B cell (primary cell): ENCODE measurements at regions of chr14 and their contacts with region 1.

Region 1: GRCh38 chr14:21917699-21918436 is 244.2 kb upstream of the OR4E1 start:
- DNase-seq: peak; percentile 81
- ATAC-seq: peak; percentile 63
- H3K4me3 ChIP-seq: peak overlapping the region in 3 of 5 experiments; percentile 13 to 21 (median 18)
- H3K4me3 Mint-ChIP-seq: peak overlapping the region; percentile 64
- H3K27ac ChIP-seq: no peak overlapping the region
- H3K27ac Mint-ChIP-seq: peak overlapping the region; percentile 44
- H3K4me1 ChIP-seq: peaks cover 12 to 23% of the 10 kb centered on the region in 2 donors
- H3K4me1 Mint-ChIP-seq: peaks cover 28% of the 10 kb centered on the region
- H3K27me3 ChIP-seq: no peaks in the 10 kb centered on the region
- H3K27me3 Mint-ChIP-seq: no peaks in the 10 kb centered on the region
- CTCF ChIP-seq: peak; percentile 89

Region 2: DNA sequence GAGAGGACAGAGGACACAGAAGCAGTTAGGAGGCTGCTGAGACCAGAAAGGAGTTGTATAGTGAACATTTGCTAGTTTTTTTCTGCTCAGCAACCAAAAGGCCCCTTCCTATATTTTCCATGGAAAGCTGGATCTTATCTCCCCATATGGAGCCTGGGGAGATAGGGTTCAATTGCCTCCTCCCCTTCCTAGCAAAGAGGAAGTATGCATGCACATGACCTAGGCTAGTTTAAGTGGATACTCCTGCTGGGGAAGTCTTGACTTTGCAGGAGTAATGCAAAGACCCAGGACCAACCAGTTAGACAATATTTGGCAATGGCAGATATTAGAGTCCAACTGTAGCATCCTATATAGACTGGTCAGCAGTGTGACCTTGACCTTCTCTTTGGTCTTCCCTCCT is 477.0 kb before region 1 on chr14:
- CTCF ChIA-PET with region 1: no interaction called
- POLR2A ChIA-PET with region 1: no interaction called
- intact Hi-C with region 1: no loop called
- DNase-seq: no peak
- ATAC-seq: no peak
- H3K4me3 ChIP-seq: no peak overlapping the region
- H3K4me3 Mint-ChIP-seq: no peak overlapping the region
- H3K27ac ChIP-seq: no peak overlapping the region
- H3K27ac Mint-ChIP-seq: no peak overlapping the region
- H3K4me1 ChIP-seq: peaks cover 12 to 13% of the 10 kb centered on the region in 2 donors
- H3K4me1 Mint-ChIP-seq: peaks cover 35% of the 10 kb centered on the region
- H3K27me3 ChIP-seq: no peaks in the 10 kb centered on the region
- H3K27me3 Mint-ChIP-seq: no peaks in the 10 kb centered on the region
- CTCF ChIP-seq: no peak

Region 3: GRCh38 chr14:21902650-21903103 is 15.2 kb before region 1 on chr14:
- CTCF ChIA-PET with region 1: interaction called, 17 read pairs
- POLR2A ChIA-PET with region 1: no interaction called
- intact Hi-C with region 1: no loop called
- DNase-seq: peak; percentile 47
- ATAC-seq: peak; percentile 51
- H3K4me3 ChIP-seq: no peak overlapping the region
- H3K4me3 Mint-ChIP-seq: peak overlapping the region; percentile 59
- H3K27ac ChIP-seq: no peak overlapping the region
- H3K27ac Mint-ChIP-seq: no peak overlapping the region
- H3K4me1 ChIP-seq: peaks cover 0 to 3% of the 10 kb centered on the region in 2 donors
- H3K4me1 Mint-ChIP-seq: peaks cover 7% of the 10 kb centered on the region
- H3K27me3 ChIP-seq: peaks cover 0 to 12% (median 7%) of the 10 kb centered on the region in 4 experiments
- H3K27me3 Mint-ChIP-seq: peaks cover 37% of the 10 kb centered on the region
- CTCF ChIP-seq: peak; percentile 51

Region 4: GRCh38 chr14:21933681-21934080 is 15.8 kb after region 1 on chr14:
- CTCF ChIA-PET with region 1: interaction called, 252 read pairs
- POLR2A ChIA-PET with region 1: interaction called, 4 read pairs
- intact Hi-C with region 1: loop called (anchors 1 kb)
- DNase-seq: peak; percentile 65
- ATAC-seq: peak; percentile 57
- H3K4me3 ChIP-seq: no peak overlapping the region
- H3K4me3 Mint-ChIP-seq: no peak overlapping the region
- H3K27ac ChIP-seq: no peak overlapping the region
- H3K27ac Mint-ChIP-seq: no peak overlapping the region
- H3K4me1 ChIP-seq: no peaks in the 10 kb centered on the region
- H3K4me1 Mint-ChIP-seq: no peaks in the 10 kb centered on the region
- H3K27me3 ChIP-seq: no peaks in the 10 kb centered on the region
- H3K27me3 Mint-ChIP-seq: no peaks in the 10 kb centered on the region
- CTCF ChIP-seq: peak; percentile 85

Region 5: GRCh38 chr14:21940887-21941856 is 23.3 kb after region 1 on chr14:
- CTCF ChIA-PET with region 1: interaction called, 17 read pairs
- POLR2A ChIA-PET with region 1: no interaction called
- intact Hi-C with region 1: no loop called
- DNase-seq: peak; percentile 25
- ATAC-seq: peak; percentile 33
- H3K4me3 ChIP-seq: no peak overlapping the region
- H3K4me3 Mint-ChIP-seq: no peak overlapping the region
- H3K27ac ChIP-seq: no peak overlapping the region
- H3K27ac Mint-ChIP-seq: no peak overlapping the region
- H3K4me1 ChIP-seq: no peaks in the 10 kb centered on the region
- H3K4me1 Mint-ChIP-seq: no peaks in the 10 kb centered on the region
- H3K27me3 ChIP-seq: peaks cover 0 to 4% (median 2%) of the 10 kb centered on the region in 4 experiments
- H3K27me3 Mint-ChIP-seq: peaks cover 25% of the 10 kb centered on the region
- CTCF ChIP-seq: peak; percentile 47

Region 6: GRCh38 chr14:21978184-21978998 is 60.5 kb after region 1 on chr14:
- CTCF ChIA-PET with region 1: interaction called, 33 read pairs
- POLR2A ChIA-PET with region 1: no interaction called
- intact Hi-C with region 1: loop called (anchors 5 kb)
- DNase-seq: peak; percentile 60
- ATAC-seq: no peak
- H3K4me3 ChIP-seq: no peak overlapping the region
- H3K4me3 Mint-ChIP-seq: no peak overlapping the region
- H3K27ac ChIP-seq: no peak overlapping the region
- H3K27ac Mint-ChIP-seq: no peak overlapping the region
- H3K4me1 ChIP-seq: no peaks in the 10 kb centered on the region
- H3K4me1 Mint-ChIP-seq: no peaks in the 10 kb centered on the region
- H3K27me3 ChIP-seq: peaks cover 0 to 9% (median 5%) of the 10 kb centered on the region in 4 experiments
- H3K27me3 Mint-ChIP-seq: peaks cover 35% of the 10 kb centered on the region
- CTCF ChIP-seq: peak; percentile 85

Region 7: GRCh38 chr14:22039938-22040775 is 122.3 kb after region 1 on chr14:
- CTCF ChIA-PET with region 1: interaction called, 4 read pairs
- POLR2A ChIA-PET with region 1: no interaction called
- intact Hi-C with region 1: loop called (anchors 5 kb)
- DNase-seq: peak; percentile 11
- ATAC-seq: no peak
- H3K4me3 ChIP-seq: no peak overlapping the region
- H3K4me3 Mint-ChIP-seq: no peak overlapping the region
- H3K27ac ChIP-seq: no peak overlapping the region
- H3K27ac Mint-ChIP-seq: no peak overlapping the region
- H3K4me1 ChIP-seq: no peaks in the 10 kb centered on the region
- H3K4me1 Mint-ChIP-seq: no peaks in the 10 kb centered on the region
- H3K27me3 ChIP-seq: peaks cover 0 to 19% (median 13%) of the 10 kb centered on the region in 4 experiments
- H3K27me3 Mint-ChIP-seq: peaks cover 41% of the 10 kb centered on the region
- CTCF ChIP-seq: peak; percentile 76

Region 8: GRCh38 chr14:22084393-22085281 is 166.8 kb after region 1 on chr14:
- CTCF ChIA-PET with region 1: interaction called, 5 read pairs
- POLR2A ChIA-PET with region 1: no interaction called
- intact Hi-C with region 1: loop called (anchors 5 kb)
- DNase-seq: peak; percentile 71
- ATAC-seq: peak; percentile 39
- H3K4me3 ChIP-seq: no peak overlapping the region
- H3K4me3 Mint-ChIP-seq: no peak overlapping the region
- H3K27ac ChIP-seq: no peak overlapping the region
- H3K27ac Mint-ChIP-seq: no peak overlapping the region
- H3K4me1 ChIP-seq: no peaks in the 10 kb centered on the region
- H3K4me1 Mint-ChIP-seq: no peaks in the 10 kb centered on the region
- H3K27me3 ChIP-seq: peaks cover 0 to 18% (median 16%) of the 10 kb centered on the region in 4 experiments
- H3K27me3 Mint-ChIP-seq: peaks cover 53% of the 10 kb centered on the region
- CTCF ChIP-seq: peak; percentile 94